ENCODE measurements at regions of chr5 and their contacts with region 1.

Region 1: DNA sequence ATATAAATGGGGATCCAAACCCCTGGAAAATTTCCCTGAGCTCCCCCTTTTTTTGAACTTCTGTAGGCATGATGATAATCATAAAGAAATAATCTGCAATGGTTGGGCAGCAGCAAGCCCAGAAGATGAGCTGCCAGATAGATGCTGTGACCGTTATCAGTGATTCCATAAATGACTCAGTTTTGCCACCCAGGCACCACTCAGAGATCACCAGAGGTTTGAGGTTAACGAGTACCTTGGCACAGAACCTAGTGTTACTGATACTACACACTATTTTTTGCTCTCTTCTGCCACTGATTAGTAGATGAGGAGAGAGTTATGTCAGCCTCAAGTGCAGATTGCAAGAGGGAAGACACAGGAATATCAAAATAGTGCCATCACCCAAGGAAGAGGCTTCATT is 199.3 kb upstream of the PTGER4 start:
- DNase-seq: peak; percentile 62
- H3K4me3 Mint-ChIP-seq: no peak overlapping the region
- H3K27ac Mint-ChIP-seq: peak overlapping the region; percentile 80
- H3K4me1 Mint-ChIP-seq: peaks cover 51% of the 10 kb centered on the region
- H3K27me3 Mint-ChIP-seq: no peaks in the 10 kb centered on the region

Region 2: GRCh38 chr5:40464511-40464910 is 15.9 kb before region 1 on chr5:
- CTCF ChIA-PET with region 1: interaction called, 4 read pairs
- intact Hi-C with region 1: loop called (anchors 1 kb)
- DNase-seq: no peak
- H3K4me3 Mint-ChIP-seq: no peak overlapping the region
- H3K27ac Mint-ChIP-seq: peak overlapping the region; percentile 12
- H3K4me1 Mint-ChIP-seq: peaks cover 31% of the 10 kb centered on the region
- H3K27me3 Mint-ChIP-seq: no peaks in the 10 kb centered on the region

Measured in activated naive CD4-positive, alpha-beta T cell treated with anti-CD3 and anti-CD28 coated beads for 36 hours (primary cell).